ENCODE measurements at regions of chr16 and their contacts with region 1.

Region 1: GRCh38 chr16:54336631-54337204 is 50.1 kb upstream of the IRX3 start:
- DNase-seq: no peak
- H3K4me3 ChIP-seq: no peak overlapping the region
- H3K27ac ChIP-seq: no peak overlapping the region
- H3K4me1 ChIP-seq: no peaks in the 10 kb centered on the region
- H3K27me3 ChIP-seq: no peaks in the 10 kb centered on the region
- CTCF ChIP-seq: no peak
- EP300 ChIP-seq: no peak
- POLR2A ChIP-seq: no peak

Region 2: GRCh38 chr16:54282202-54282927 is 54.4 kb before region 1 on chr16:
- intact Hi-C with region 1: no loop called
- DNase-seq: peak in 3 of 5 donors; percentile 16 to 60 (median 35)
- H3K4me3 ChIP-seq: no peak overlapping the region
- H3K27ac ChIP-seq: no peak overlapping the region
- H3K4me1 ChIP-seq: peaks cover 1% of the 10 kb centered on the region
- H3K27me3 ChIP-seq: peaks cover 3% of the 10 kb centered on the region
- CTCF ChIP-seq: no peak
- EP300 ChIP-seq: no peak
- POLR2A ChIP-seq: no peak

Region 3: GRCh38 chr16:54385141-54385540 is 48.4 kb after region 1 on chr16:
- intact Hi-C with region 1: loop called in 1 of 4 experiments (anchors 2 kb)
- DNase-seq: no peak
- H3K4me3 ChIP-seq: no peak overlapping the region
- H3K27ac ChIP-seq: no peak overlapping the region
- H3K4me1 ChIP-seq: no peaks in the 10 kb centered on the region
- H3K27me3 ChIP-seq: no peaks in the 10 kb centered on the region
- CTCF ChIP-seq: no peak
- EP300 ChIP-seq: no peak
- POLR2A ChIP-seq: no peak